Activated naive CD4-positive, alpha-beta T cell treated with anti-CD3 and anti-CD28 coated beads, Interleukin-2, amount 10 ng/mL, durations not matched to agents 7 days and 5 days (primary cell): ENCODE measurements at regions of chr12 and their contacts with region 1.

Region 1: GRCh38 chr12:12736759-12737676 is 19.9 kb downstream of the CDKN1B start:
- DNase-seq: peak; percentile 72
- H3K4me3 Mint-ChIP-seq: peak overlapping the region; percentile 64
- H3K27ac Mint-ChIP-seq: peak overlapping the region; percentile 97
- H3K4me1 Mint-ChIP-seq: peaks cover 73% of the 10 kb centered on the region
- H3K27me3 Mint-ChIP-seq: no peaks in the 10 kb centered on the region

Region 2: GRCh38 chr12:12488823-12489550 is 248.0 kb before region 1 on chr12:
- CTCF ChIA-PET with region 1: no interaction called
- DNase-seq: no peak
- H3K4me3 Mint-ChIP-seq: no peak overlapping the region
- H3K27ac Mint-ChIP-seq: no peak overlapping the region
- H3K4me1 Mint-ChIP-seq: peaks cover 4% of the 10 kb centered on the region
- H3K27me3 Mint-ChIP-seq: no peaks in the 10 kb centered on the region

Region 3: GRCh38 chr12:12546314-12546772 is 190.7 kb before region 1 on chr12:
- CTCF ChIA-PET with region 1: no interaction called
- DNase-seq: no peak
- H3K4me3 Mint-ChIP-seq: no peak overlapping the region
- H3K27ac Mint-ChIP-seq: no peak overlapping the region
- H3K4me1 Mint-ChIP-seq: peaks cover 18% of the 10 kb centered on the region
- H3K27me3 Mint-ChIP-seq: no peaks in the 10 kb centered on the region

Region 4: DNA sequence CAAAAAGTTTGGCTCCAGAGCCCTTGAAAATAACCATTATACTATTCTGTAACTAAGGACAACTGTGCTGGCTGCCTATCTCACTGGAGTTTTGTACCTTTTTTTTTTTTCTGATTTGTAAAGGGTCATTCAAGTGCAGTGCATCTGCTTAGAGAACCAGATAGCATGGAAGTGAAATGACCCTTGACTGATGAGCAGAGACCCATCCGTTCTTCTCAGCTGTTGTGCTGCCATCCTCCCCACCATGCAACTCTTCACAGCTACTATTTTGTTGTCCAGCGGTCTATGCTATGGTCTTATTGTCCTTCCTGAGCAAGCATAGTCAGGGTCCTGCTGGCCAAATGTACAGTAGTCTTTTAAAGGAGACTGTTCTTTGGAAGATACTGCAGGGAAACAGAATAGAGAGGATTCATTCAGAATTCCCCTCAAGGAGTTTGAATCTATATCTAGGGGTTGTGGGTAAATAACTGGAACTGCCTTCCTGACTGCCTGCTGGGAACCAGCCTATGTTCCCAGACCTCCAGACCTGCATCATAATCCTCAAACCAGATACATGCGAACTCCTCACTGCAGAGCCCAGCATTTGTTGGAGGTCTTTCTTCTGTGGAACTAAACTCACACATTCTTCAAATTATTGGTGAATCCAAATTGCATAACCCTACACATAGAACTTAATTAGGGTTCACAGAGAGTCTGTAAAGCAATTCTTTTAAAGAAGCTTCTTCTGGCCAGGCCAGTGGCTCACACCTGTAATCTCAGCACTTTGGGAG is 82.1 kb before region 1 on chr12:
- CTCF ChIA-PET with region 1: interaction called, 10 read pairs
- DNase-seq: no peak
- H3K4me3 Mint-ChIP-seq: no peak overlapping the region
- H3K27ac Mint-ChIP-seq: no peak overlapping the region
- H3K4me1 Mint-ChIP-seq: peaks cover 12% of the 10 kb centered on the region
- H3K27me3 Mint-ChIP-seq: no peaks in the 10 kb centered on the region

Region 5: DNA sequence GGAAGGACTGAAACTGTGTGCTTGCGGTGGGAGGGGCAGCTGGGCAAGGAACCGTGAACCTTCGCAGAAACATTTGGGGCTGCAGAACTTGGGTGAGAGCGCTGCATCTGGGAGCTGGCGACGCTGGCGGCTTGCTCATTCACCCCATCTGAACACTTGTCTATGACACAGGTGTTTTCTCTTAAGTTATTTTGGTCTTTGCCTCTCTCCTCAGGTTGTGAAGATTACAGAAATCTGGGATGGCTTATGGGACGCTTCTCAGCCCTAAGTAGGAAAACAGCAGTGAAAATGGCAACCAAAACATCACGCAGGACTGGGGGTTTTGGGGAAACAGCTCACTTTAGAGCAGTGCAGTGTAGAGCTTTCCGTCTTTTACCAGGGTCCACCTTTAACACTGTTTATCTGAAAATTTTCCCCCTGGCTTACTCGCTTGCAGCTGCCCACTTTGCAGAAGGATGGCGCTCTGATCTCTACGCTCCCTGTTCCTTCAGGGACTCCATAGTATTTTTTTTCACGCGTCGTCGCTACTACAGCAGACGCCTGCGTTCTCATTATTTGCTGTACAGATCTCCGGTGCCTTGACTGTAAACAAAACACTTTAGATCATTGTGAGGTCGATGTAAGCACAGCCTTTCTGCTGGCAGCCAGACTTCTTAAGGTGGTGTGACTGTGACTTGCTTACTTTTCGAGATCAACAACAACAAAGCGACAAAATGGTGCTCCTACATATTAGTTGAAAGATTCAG is 22.6 kb before region 1 on chr12:
- CTCF ChIA-PET with region 1: interaction called, 25 read pairs
- DNase-seq: peak; percentile 75
- H3K4me3 Mint-ChIP-seq: peak overlapping the region; percentile 93
- H3K27ac Mint-ChIP-seq: peak overlapping the region; percentile 100
- H3K4me1 Mint-ChIP-seq: peaks cover 39% of the 10 kb centered on the region
- H3K27me3 Mint-ChIP-seq: peaks cover 7% of the 10 kb centered on the region

Region 6: DNA sequence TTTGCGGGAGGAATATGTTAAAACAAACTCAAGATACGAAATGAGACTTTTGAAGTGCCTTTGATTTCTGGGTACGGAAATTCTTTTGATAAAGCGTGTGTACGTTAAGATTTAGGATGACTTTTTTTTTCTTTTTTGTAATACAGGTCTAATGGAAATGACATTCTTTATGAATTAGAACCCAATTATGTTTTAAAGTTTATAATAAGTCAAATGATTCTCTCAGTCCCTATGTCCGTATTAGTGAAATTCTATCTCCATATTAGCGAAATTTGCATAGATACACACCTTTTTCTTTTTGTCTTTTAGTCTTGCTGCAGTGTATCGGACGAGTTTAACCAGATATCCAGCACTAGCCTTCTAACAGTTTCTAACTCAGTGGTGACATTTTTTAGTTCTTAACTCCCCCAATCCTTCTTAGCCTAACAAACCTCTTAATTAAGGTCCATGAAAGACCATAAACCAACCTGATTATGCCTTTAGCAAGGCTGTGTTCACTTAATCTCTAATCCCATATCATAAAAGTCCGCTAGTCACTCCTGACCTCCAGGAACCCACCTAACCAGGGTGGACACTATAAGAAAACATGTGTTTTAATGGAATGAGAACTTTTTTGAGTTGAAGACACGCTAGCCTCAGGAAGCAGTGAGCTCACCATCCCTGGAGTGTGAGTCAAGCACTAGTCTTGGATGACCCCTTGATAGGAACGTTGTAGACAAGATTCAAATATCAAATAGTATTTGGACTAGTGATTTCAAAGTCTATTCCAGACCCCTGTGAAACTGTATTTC is 10.5 kb before region 1 on chr12:
- CTCF ChIA-PET with region 1: interaction called, 17 read pairs
- DNase-seq: no peak
- H3K4me3 Mint-ChIP-seq: peak overlapping the region; percentile 89
- H3K27ac Mint-ChIP-seq: peak overlapping the region; percentile 97
- H3K4me1 Mint-ChIP-seq: peaks cover 35% of the 10 kb centered on the region
- H3K27me3 Mint-ChIP-seq: peaks cover 14% of the 10 kb centered on the region

Region 7: DNA sequence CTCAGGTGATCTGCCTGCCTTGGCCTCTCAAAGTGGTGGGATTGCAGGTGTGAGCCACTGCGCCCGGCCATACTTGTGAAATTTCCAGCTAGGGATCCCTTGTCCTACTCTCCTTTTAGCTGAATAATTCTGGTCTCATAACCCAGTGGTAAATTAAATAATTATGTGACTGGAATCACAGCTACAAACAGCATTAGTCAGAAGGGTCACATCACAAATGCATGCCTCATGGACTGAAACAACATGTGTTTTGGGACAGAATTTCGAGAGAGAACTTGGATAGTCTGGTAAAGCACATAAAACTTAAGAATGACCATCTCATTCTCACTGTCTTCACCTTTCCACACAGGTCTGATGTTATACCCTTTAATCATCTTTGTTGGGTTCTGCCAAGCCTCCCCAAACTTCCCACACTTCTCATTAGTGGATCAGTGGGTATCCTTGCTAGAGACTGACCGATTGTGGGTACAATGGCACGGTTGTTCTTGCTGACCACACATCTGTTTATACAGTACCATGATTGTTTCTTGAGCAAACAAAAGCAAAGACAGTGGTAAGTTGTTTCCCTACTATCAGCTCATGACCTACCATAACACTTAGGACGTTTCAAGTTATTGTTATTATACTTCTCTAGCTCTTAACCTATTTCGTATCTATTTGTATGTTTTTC is 209.8 kb after region 1 on chr12:
- CTCF ChIA-PET with region 1: no interaction called
- DNase-seq: no peak
- H3K4me3 Mint-ChIP-seq: no peak overlapping the region
- H3K27ac Mint-ChIP-seq: no peak overlapping the region
- H3K4me1 Mint-ChIP-seq: no peaks in the 10 kb centered on the region
- H3K27me3 Mint-ChIP-seq: peaks cover 27% of the 10 kb centered on the region